Caco-2 (cell line): ENCODE measurements at regions of chr10 and their contacts with region 1.

Region 1: GRCh38 chr10:119199231-119199992 is 8.0 kb upstream of the GRK5 start:
- DNase-seq: peak; percentile 78
- H3K4me3 ChIP-seq: no peak overlapping the region
- H3K4me3 Mint-ChIP-seq: no peak overlapping the region
- H3K27ac Mint-ChIP-seq: no peak overlapping the region
- H3K4me1 ChIP-seq: peaks cover 6% of the 10 kb centered on the region; the same call in 1 of the 2 replicates
- H3K4me1 Mint-ChIP-seq: peaks cover 7% of the 10 kb centered on the region
- H3K27me3 ChIP-seq: no peaks in the 10 kb centered on the region
- H3K27me3 Mint-ChIP-seq: no peaks in the 10 kb centered on the region
- CTCF ChIP-seq: peak; percentile 68 to 93

Region 2: GRCh38 chr10:118658762-118659161 is 540.6 kb before region 1 on chr10:
- CTCF ChIA-PET with region 1: no interaction called
- POLR2A ChIA-PET with region 1: no interaction called
- intact Hi-C with region 1: no loop called
- DNase-seq: no peak
- H3K4me3 ChIP-seq: no peak overlapping the region
- H3K4me3 Mint-ChIP-seq: no peak overlapping the region
- H3K27ac Mint-ChIP-seq: no peak overlapping the region
- H3K4me1 ChIP-seq: no peaks in the 10 kb centered on the region
- H3K4me1 Mint-ChIP-seq: no peaks in the 10 kb centered on the region
- H3K27me3 ChIP-seq: no peaks in the 10 kb centered on the region; the same call in 1 of the 2 replicates
- H3K27me3 Mint-ChIP-seq: peaks cover 27% of the 10 kb centered on the region
- CTCF ChIP-seq: no peak

Region 3: DNA sequence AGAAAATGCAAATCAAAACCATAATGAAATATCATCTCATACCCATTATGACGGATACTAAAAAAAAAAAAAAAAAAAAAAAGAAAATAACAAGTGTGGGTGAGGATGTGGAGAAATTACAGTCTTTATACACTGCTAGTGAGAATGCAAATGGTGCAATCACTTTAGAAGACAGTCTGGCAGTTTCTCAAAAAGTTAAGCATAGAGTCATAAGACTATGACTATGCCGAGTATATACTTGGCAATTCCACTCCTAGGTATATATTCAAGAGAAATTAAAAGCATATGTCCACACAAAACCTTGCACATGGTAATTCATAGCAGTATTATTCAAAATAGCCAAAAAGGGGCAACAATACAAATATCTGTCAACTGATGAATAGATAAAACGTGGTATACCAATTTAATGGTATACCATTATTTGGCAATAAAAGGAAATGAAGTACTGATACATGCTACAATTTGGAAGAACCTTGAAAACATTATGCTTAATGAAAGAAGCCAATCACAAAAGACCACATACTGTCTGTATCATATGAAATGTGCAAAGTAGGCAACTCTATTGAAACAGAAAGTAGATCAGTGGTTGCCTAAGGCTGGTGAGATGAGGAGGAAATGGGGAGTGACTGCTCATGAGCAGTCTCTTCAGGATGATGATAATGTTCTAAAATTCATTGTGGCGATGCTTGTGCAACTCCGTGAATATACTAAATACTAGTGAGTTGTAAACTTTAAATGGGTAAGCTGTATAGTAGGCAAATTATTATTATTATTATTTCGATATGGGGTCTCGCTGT is 260.0 kb before region 1 on chr10:
- CTCF ChIA-PET with region 1: no interaction called
- POLR2A ChIA-PET with region 1: no interaction called
- intact Hi-C with region 1: no loop called
- DNase-seq: no peak
- H3K4me3 ChIP-seq: no peak overlapping the region
- H3K4me3 Mint-ChIP-seq: no peak overlapping the region
- H3K27ac Mint-ChIP-seq: no peak overlapping the region
- H3K4me1 ChIP-seq: no peaks in the 10 kb centered on the region
- H3K4me1 Mint-ChIP-seq: no peaks in the 10 kb centered on the region
- H3K27me3 ChIP-seq: no peaks in the 10 kb centered on the region
- H3K27me3 Mint-ChIP-seq: peaks cover 10% of the 10 kb centered on the region
- CTCF ChIP-seq: no peak

Region 4: DNA sequence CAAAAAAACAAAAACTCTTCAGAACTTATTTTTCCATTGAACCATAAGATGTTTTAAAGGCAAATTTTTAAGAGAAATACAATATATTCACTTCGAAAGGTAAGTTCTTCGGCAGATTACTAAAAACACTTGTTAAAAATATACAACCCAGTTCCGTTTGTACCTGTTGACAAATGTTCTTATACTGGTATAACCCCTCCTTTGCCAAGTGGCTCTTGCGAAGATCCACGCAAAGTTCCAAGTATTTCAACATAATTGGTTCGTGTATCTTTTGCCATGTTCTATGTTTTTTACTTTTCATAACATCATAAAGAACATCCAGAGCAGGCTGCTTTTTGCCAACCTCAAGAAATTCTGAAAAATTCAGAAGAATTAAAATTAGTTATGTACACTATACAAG is 125.8 kb before region 1 on chr10:
- CTCF ChIA-PET with region 1: no interaction called
- POLR2A ChIA-PET with region 1: no interaction called
- intact Hi-C with region 1: no loop called
- DNase-seq: no peak
- H3K4me3 ChIP-seq: no peak overlapping the region
- H3K4me3 Mint-ChIP-seq: no peak overlapping the region
- H3K27ac Mint-ChIP-seq: no peak overlapping the region
- H3K4me1 ChIP-seq: peaks cover 1% of the 10 kb centered on the region; the same call in 1 of the 2 replicates
- H3K4me1 Mint-ChIP-seq: peaks cover 4% of the 10 kb centered on the region
- H3K27me3 ChIP-seq: no peaks in the 10 kb centered on the region
- H3K27me3 Mint-ChIP-seq: no peaks in the 10 kb centered on the region
- CTCF ChIP-seq: no peak

Region 5: GRCh38 chr10:119243488-119243887 is 44.1 kb after region 1 on chr10:
- CTCF ChIA-PET with region 1: interaction called, 11 read pairs
- POLR2A ChIA-PET with region 1: no interaction called
- intact Hi-C with region 1: no loop called
- DNase-seq: peak; percentile 59 to 68
- H3K4me3 ChIP-seq: peak overlapping the region; percentile 15
- H3K4me3 Mint-ChIP-seq: peak overlapping the region; percentile 44
- H3K27ac Mint-ChIP-seq: peak overlapping the region; percentile 34
- H3K4me1 ChIP-seq: peaks cover 40% of the 10 kb centered on the region
- H3K4me1 Mint-ChIP-seq: peaks cover 30% of the 10 kb centered on the region
- H3K27me3 ChIP-seq: no peaks in the 10 kb centered on the region
- H3K27me3 Mint-ChIP-seq: no peaks in the 10 kb centered on the region
- CTCF ChIP-seq: no peak

Region 6: GRCh38 chr10:119290291-119291048 is 91.1 kb after region 1 on chr10:
- CTCF ChIA-PET with region 1: interaction called, 13 read pairs
- POLR2A ChIA-PET with region 1: no interaction called
- intact Hi-C with region 1: no loop called
- DNase-seq: peak; percentile 48 to 62
- H3K4me3 ChIP-seq: no peak overlapping the region
- H3K4me3 Mint-ChIP-seq: no peak overlapping the region
- H3K27ac Mint-ChIP-seq: peak overlapping the region; percentile 37
- H3K4me1 ChIP-seq: peaks cover 19% of the 10 kb centered on the region
- H3K4me1 Mint-ChIP-seq: peaks cover 16% of the 10 kb centered on the region
- H3K27me3 ChIP-seq: no peaks in the 10 kb centered on the region
- H3K27me3 Mint-ChIP-seq: no peaks in the 10 kb centered on the region
- CTCF ChIP-seq: no peak

Region 7: GRCh38 chr10:119445311-119445934 is 246.0 kb after region 1 on chr10:
- CTCF ChIA-PET with region 1: interaction called, 95 read pairs
- POLR2A ChIA-PET with region 1: no interaction called
- intact Hi-C with region 1: loop called (anchors 1 kb)
- DNase-seq: peak; percentile 84 to 90
- H3K4me3 ChIP-seq: no peak overlapping the region
- H3K4me3 Mint-ChIP-seq: no peak overlapping the region
- H3K27ac Mint-ChIP-seq: no peak overlapping the region
- H3K4me1 ChIP-seq: no peaks in the 10 kb centered on the region
- H3K4me1 Mint-ChIP-seq: no peaks in the 10 kb centered on the region
- H3K27me3 ChIP-seq: no peaks in the 10 kb centered on the region
- H3K27me3 Mint-ChIP-seq: no peaks in the 10 kb centered on the region
- CTCF ChIP-seq: peak; percentile 91 to 98

Region 8: GRCh38 chr10:119542988-119543813 is 343.8 kb after region 1 on chr10:
- CTCF ChIA-PET with region 1: interaction called, 15 read pairs
- POLR2A ChIA-PET with region 1: no interaction called
- intact Hi-C with region 1: loop called (anchors 1 kb)
- DNase-seq: peak; percentile 71 to 77
- H3K4me3 ChIP-seq: peak overlapping the region; percentile 72
- H3K4me3 Mint-ChIP-seq: peak overlapping the region; percentile 87
- H3K27ac Mint-ChIP-seq: peak overlapping the region; percentile 81
- H3K4me1 ChIP-seq: peaks cover 5% of the 10 kb centered on the region; the same call in 1 of the 2 replicates
- H3K4me1 Mint-ChIP-seq: peaks cover 14% of the 10 kb centered on the region
- H3K27me3 ChIP-seq: no peaks in the 10 kb centered on the region
- H3K27me3 Mint-ChIP-seq: no peaks in the 10 kb centered on the region
- CTCF ChIP-seq: peak; percentile 65 to 73